AG04450 (cell line): ENCODE measurements at regions of chr16 and their contacts with region 1.

Region 1: DNA sequence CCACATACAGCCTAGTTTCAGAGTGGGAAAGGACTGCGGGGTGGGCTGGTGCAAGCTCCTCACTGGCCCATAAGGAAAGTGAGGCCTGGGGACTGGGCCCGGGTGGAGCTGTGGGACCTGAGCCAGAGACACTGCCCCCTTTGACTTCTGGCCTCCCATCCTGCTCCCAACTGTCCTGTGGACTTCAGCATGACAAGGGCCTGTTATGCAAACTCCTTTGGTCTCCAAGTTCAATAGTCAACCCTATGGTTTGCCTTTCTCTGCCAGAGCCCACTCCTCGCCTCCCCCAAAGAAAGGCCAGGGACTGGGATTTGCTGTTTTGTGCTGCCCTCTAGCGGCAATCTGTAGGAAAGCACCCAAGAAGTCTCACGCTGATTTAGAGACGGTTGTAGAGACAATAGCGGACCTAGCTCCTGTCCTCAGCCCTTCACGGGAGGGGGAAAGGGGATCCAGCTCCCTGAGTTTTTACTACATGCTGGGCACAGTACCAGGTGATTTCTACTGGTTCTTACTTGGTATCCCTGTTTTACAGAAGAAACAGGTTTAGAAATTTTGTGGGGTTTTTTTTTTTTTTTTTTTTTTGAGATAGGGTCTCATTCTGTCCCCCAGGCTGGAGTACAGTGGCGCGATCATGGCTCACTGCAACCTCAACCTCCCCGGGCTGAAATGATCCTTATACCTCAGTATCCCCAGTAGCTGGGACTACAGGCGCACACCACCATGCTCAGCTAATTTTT is 1.2 kb upstream of the TLCD3B start:
- DNase-seq: no peak
- H3K4me3 ChIP-seq: no peak overlapping the region
- H3K27ac ChIP-seq: no peak overlapping the region
- H3K27me3 ChIP-seq: peaks cover 49% of the 10 kb centered on the region
- CTCF ChIP-seq: peak; percentile 84

Region 2: GRCh38 chr16:30018731-30019158 is 13.5 kb before region 1 on chr16:
- CTCF ChIA-PET with region 1: interaction called, 10 read pairs
- POLR2A ChIA-PET with region 1: no interaction called
- DNase-seq: no peak
- H3K4me3 ChIP-seq: no peak overlapping the region
- H3K27ac ChIP-seq: no peak overlapping the region
- H3K27me3 ChIP-seq: peaks cover 12% of the 10 kb centered on the region
- CTCF ChIP-seq: no peak